Dorsolateral prefrontal cortex (tissue), 120 donors: ENCODE measurements at regions of chr16 and their contacts with region 1.

Region 1: DNA sequence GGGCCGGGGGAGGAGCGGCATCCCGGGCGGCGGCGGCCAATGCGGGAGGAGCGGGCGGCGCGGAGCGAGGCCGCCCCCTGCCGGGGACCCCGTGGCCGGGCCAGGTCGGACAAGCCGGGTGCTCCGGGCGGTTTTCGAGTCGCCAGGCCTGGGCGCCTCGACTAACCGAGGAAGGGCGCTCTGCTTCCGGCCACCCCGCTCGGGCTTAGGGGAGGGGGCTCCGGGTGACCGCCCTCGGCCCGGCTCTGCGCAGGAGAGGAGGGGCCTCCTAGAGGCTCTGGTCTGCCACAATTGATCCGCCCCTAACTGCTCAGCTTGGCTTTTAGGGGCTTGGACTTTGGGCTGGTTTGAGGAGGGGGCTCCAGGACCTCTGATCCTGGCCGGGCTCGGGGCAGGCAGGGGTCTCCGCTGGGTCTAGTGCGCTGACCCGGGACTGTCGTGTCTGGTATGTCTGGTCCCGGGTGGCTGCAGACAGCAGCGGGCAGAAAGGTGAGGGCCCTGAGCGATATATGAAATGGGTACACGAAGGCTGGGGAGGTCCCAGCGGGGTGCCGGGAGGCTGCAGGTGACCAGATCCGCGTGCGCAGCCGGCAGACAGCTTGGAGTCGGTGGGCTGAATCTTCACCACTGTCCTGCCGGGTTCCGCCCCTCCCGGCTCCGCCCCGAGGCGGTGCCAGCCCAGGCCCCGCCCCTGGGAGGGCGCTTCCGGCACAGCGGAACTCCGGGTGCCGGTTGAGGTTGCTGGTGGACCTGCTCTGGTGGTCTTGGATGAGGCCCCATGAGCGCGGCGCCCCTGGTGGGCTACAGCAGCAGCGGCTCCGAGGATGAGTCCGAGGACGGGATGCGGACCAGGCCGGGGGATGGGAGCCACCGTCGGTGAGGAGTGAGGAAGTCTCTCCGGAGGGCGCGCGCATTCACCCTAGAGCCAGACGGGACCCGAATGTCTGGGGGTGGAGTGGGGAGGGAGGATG is at the start of gene USB1:
- DNase-seq: peak; percentile 74 to 92 (median 84)
- H3K4me3 ChIP-seq: peak within 1 kb of the TSS; percentile 64 to 91 (median 79)
- H3K27ac ChIP-seq: peak within 1 kb of the TSS; percentile 23 to 94 (median 88)
- H3K27me3 ChIP-seq: no peaks in the 10 kb centered on the region
- CTCF ChIP-seq: peak; percentile 22 to 96 (median 76)
- total RNA-seq, gene USB1: 28.3 to 59.7 (median 41.9) TPM

Region 2: DNA sequence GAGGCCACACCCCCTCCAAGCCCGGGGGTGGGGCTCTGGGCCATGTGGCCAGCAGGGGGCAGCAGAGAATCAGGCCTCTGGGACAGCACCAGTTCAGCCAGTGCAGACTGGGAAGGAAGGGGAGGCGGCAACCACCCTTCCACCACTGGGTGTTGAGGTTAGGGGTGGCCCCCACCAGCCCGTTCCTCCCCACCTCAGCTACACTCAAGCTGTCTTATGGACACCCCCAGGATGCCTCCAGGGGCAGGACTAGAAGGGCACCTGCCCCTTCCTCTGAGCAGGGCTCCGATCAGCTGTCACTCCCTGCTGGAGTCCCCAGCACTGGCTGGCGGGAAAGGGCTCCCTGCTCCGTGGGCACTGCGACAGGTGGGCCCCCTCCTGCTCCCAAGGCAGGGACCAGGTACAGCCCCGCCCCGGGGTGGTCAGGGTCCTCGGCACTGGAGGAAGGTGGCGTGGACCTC is 243.6 kb before region 1 on chr16:
- intact Hi-C with region 1: loop called (anchors 5 to 10 kb)
- DNase-seq: peak; percentile 76 to 90 (median 84)
- H3K4me3 ChIP-seq: no peak overlapping the region
- H3K27ac ChIP-seq: peak overlapping the region in 37 of 59 donors; percentile 5 to 85 (median 52)
- H3K27me3 ChIP-seq: no peaks in the 10 kb centered on the region
- CTCF ChIP-seq: peak; percentile 68 to 99 (median 96)

Region 3: GRCh38 chr16:57802341-57803133 is 198.5 kb before region 1 on chr16 and contains the start of gene KIFC3:
- intact Hi-C with region 1: loop called in 1 of 2 experiments (anchors 2 kb)
- DNase-seq: peak; percentile 49 to 92 (median 86)
- H3K4me3 ChIP-seq: peak within 1 kb of the TSS; percentile 55 to 89 (median 73)
- H3K27ac ChIP-seq: peak within 1 kb of the TSS; percentile 84 to 99 (median 94)
- H3K27me3 ChIP-seq: no peaks in the 10 kb centered on the region
- CTCF ChIP-seq: peak in 34 of 56 donors; percentile 7 to 70 (median 48)
- total RNA-seq, gene KIFC3: 29.4 to 72.9 (median 48.3) TPM

Region 4: GRCh38 chr16:57899771-57900661 is 101.0 kb before region 1 on chr16:
- intact Hi-C with region 1: loop called (anchors 1 to 2 kb)
- DNase-seq: peak; percentile 51 to 87 (median 75)
- H3K4me3 ChIP-seq: no peak overlapping the region
- H3K27ac ChIP-seq: no peak overlapping the region
- H3K27me3 ChIP-seq: peaks cover 0 to 4% (median 0%) of the 10 kb centered on the region in 45 donors
- CTCF ChIP-seq: peak; percentile 64 to 97 (median 91)

Region 5: DNA sequence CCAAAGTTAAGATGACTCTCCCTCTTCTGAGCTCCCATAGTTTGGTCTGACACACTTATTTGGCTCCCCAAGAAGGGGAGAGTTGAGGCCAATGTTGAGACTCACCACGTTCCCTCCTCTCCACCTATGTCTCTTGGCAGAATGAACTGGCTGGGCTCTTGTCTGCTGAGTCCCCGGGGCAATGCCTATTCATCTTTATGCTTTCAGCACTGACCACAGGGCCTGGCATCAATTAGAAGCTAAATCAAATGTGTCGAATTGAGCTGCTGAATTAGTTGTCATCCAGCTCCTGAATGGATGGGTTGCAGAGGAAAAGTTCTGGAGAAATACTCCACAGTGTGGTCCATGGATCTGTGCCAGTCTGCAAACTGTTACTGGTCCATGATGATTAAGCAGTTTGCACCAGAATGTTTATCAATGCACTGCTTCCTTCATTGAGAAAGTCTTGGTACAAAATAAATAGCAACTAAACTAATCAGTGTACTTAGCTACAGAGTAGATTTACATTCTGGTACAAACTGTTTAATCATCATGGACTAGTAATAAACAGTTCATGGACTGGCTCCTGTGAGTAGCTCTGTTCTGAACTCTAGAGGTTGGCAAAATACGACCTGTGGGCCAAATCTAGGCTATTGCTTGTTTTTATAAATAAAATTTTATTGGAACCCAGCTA is 34.7 kb before region 1 on chr16:
- intact Hi-C with region 1: no loop called
- DNase-seq: no peak
- H3K4me3 ChIP-seq: no peak overlapping the region
- H3K27ac ChIP-seq: no peak overlapping the region
- H3K27me3 ChIP-seq: no peaks in the 10 kb centered on the region
- CTCF ChIP-seq: no peak